ENCODE measurements at regions of chr10 and their contacts with region 1.

Region 1: DNA sequence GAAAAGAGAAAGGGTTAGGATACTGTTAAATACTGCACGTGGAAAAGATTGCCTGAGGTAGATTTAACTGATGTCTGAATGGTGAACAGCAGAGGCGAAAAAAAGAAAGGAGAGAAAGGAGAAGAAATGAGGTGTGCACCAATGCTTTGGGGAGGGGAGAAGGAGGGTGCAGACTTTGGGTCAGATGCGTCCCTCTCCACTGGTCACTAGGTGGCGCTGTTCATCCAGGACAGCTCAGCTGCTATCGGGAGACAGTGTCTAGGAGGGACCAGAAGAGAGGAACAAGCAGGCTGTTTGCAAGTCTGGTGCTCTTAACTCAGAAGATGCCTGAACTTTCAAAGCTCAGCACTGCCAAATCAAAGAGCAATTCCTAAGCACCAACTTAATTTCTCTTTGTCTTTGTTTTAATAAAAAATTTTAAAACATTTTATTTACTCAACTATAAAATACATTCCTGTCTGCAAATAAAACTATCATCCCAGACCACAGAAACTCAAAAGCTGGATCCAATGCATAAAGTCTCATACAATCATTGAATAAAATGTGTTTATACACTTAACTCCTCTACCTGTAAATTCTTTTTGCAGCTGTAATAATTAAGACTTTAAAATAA is 83.9 kb upstream of the PDLIM1 start:
- DNase-seq: peak; percentile 49 to 74
- H3K4me3 ChIP-seq: no peak overlapping the region
- H3K27ac ChIP-seq: no peak overlapping the region
- H3K4me1 ChIP-seq: no peaks in the 10 kb centered on the region
- H3K27me3 ChIP-seq: no peaks in the 10 kb centered on the region
- CTCF ChIP-seq: peak; percentile 90 to 93 (median 90)
- POLR2A ChIP-seq: no peak

Region 2: DNA sequence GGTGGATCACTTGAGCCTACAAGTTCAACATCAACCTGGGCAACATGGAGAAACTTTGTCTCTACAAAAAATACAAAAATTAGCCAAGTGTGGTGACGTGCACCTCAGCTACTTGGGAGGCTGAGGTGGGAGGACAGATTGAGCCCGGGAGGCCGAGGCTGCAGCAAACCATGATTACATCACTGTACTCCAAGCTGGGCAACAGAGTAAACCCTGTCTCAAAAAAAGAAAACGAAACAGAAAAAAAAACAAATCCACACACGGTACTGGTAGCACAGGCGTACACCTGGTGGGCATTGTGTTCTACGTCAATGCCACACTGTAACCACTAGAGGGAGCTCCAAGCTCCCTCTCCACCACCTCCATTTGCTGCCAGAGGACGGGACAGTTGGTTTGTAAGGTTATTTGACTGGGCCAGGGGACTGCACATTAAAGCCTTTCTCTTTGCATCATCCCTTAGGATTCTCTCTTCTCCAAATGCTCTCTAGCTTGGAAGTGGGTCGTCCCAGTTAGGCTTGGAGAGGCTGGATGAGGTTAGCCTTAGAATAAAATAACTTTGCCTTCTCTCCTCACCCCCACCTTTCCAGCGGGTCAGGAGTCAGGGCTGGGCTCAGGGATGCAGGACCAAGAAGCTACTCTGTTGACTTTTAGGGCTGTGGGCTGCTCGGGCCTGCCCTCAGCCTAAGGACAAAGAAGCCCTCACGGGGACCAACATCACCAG is 55.7 kb after region 1 on chr10:
- intact Hi-C with region 1: loop called (anchors 10 kb)
- DNase-seq: peak in 1 of 2 donors; percentile 48
- H3K4me3 ChIP-seq: no peak overlapping the region
- H3K27ac ChIP-seq: peak overlapping the region in 1 of 2 donors; percentile 40
- H3K4me1 ChIP-seq: peaks cover 0 to 7% of the 10 kb centered on the region in 2 donors
- H3K27me3 ChIP-seq: no peaks in the 10 kb centered on the region
- CTCF ChIP-seq: peak; percentile 92 to 97 (median 95)
- POLR2A ChIP-seq: no peak

Measured in breast epithelium (tissue), 4 donors.